Left cardiac atrium (tissue), 4 donors: ENCODE measurements at regions of chr21 and their contacts with region 1.

Region 1: GRCh38 chr21:43300858-43301620 is 125.9 kb downstream of the SIK1 start:
- DNase-seq: peak; percentile 72
- ATAC-seq: peak; percentile 32 to 76

Region 2: DNA sequence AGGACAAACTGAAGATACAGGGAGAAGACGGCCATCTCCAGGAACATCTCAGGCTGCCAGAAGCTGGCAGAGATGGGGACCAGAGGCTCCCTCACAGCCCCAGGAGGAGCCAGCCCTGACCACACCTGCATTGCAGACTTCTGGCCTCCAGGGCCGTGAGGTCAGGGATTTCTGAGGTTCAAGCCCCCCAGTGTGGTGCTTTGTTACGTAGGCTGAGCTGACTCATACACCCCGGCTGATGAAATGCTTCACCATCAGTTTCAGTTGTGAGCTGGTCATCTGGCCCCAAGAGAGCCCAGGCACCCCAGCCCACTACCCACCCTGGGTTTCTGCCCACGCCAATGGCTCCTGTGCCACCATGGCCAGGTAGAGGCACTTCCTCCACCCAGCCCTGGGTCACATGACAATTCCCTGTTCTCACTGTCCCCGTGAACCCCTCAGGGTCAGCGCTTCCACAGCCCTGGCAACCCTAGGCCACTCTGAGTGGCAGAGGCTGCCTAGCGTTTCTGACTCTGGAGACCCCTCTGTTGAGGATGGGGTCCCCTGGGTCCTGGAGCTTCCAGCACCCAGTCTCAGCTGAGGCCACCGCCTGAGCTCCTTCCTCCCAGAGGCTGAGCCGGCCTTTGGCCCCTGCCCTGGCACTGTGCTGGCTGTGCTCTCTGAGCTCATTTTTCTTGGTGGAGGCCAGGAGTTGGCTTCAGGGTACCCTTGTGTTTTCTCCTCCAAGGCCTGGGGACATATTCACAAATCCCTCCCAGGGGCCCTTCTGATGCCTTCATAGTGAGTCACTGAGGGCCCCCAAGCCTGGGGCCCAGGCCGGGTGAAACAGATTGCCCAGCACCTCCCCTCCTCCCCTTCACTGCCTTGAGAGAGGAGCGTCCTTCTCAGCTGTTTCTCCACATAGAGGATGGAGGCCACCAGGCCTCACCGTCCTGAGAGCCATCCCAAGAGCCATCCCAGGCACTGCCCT is 19.8 kb after region 1 on chr21:
- intact Hi-C with region 1: loop called in 1 of 2 experiments (anchors 2 kb)
- DNase-seq: no peak
- ATAC-seq: no peak

Region 3: DNA sequence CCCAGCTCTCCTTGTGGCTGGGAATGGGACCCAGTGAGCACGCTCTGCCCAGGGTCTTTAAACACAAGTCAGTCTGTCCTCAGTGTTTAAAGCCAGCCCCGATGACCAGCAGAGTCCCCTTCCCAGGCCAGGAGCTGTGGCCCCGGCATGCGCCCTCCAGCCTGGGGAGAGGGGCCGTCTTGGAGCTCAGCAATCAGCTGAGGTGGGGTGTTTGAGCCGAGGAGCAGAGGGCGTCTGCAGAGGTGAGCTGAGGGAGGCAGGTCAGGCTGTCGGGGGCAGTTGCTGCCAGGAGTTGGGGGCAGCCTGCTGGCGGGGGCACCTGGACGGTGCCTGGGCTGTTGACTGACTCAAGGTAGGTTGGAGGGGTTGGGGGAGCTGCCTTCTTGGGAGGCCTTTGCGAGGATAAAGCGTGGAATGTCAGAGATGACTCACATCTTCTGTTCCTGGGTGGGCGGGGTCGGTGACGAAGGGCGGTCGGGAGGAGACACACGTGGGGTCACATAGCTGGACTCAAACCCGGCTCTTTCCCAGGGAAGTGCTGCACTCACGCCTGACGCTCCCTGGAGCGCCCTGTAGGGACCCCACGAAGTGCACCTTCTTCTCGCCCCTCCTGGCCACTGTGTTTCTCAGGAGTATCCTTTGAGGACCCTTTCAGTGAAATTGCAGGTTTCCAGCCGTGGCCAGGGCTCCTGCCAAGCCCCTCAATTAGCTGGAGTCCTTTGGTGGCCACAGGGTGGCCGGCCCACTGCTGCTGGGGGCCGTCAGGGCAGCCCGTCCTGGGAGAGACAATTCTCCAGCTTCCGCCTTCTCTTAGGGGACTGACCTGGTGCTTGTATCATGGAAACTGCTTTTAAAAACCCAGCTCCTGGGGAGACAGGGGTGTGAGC is 39.7 kb after region 1 on chr21:
- intact Hi-C with region 1: loop called in 1 of 2 experiments (anchors 5 kb)
- DNase-seq: peak; percentile 36
- ATAC-seq: peak; percentile 31 to 73